ENCODE measurements at regions of chr12 and their contacts with region 1.

Region 1: DNA sequence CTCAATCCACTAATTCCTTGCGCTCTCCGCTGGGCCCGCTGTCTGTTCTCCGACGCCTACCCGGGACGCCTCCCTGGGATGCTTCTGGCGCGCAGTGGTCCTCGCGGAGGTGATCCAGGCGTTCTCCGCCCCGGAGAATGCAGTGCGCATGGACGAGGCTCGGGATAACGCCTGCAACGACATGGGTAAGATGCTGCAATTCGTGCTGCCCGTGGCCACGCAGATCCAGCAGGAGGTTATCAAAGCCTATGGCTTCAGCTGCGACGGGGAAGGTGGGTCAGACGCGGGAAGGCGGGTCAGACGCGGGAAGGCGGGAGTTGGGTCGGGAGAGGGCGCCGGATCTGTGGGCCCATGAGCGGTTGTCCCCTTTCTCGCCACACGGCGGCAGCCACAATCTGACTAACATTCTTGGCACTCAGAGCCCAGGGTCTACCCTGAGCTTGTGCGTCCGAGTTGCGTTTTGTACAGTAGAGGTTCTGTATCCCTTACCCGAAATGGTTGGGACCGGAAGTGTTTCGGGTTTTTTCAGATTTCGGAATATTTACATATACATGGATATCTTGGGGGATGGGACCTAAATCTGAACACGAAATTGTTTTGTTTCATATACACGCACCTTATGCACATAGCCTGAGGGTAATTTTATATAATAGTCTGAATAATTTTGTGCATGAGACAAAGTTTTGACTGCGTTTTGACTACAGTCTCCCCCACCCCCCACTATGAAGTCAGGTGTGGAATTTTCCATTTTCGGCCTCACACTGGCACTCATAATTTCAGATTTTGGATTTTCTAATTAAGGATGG is 762 bp downstream of the C12orf57 start:
- DNase-seq: peak; percentile 55 to 92 (median 65)
- ATAC-seq: peak; percentile 72
- H3K4me3 ChIP-seq: peak overlapping the region; percentile 49
- H3K27ac ChIP-seq: peak overlapping the region; percentile 96
- H3K4me1 ChIP-seq: peaks cover 13 to 50% of the 10 kb centered on the region in 2 experiments
- H3K27me3 ChIP-seq: no peaks in the 10 kb centered on the region
- CTCF ChIP-seq: peak; percentile 84 to 98 (median 92); a peak in 5 of 6 replicates
- EP300 ChIP-seq: no peak
- POLR2A ChIP-seq: no peak
- RAD21 ChIP-seq: peak; percentile 90 to 91

Region 2: DNA sequence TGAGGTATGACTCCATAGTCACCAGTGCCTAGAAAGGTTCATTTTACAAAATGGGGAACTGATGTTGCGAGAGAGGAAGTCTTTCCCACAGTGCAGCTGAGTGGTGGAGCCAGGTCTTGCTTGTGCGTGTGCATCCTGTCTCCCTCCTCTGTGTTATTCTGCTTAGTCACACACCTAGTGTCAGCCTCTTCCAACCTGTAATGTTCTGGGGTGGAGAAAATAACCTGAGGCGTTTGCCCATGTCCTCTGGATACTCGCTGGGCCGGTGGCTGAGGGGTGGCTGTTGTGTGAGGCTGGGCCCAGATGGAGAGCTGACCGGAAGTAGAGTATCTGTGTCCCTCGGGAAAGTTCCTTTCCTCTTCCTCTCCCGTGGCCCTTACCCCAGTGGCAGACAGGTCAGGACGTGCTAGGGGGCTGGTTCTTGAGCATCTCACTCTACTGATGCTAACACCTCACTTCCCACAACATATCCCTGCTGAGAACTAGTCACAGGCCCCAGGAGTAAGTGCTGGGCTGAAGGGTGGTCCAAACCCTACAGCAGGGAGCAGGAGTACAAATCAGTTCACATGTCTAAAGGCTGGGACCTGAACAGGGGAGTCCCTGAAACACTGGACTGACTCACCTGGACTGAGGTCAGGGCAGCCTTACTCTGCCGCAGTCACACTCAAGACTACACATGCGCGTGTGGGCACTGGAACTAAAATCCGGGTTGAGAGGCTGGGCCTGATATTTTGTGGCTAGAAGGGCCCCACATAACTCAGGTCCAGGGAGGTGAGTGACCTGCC is 198.7 kb before region 1 on chr12:
- CTCF ChIA-PET with region 1: no interaction called
- POLR2A ChIA-PET with region 1: no interaction called
- in situ Hi-C with region 1: no loop called
- intact Hi-C with region 1: no loop called
- DNase-seq: no peak
- ATAC-seq: peak; percentile 71
- H3K4me3 ChIP-seq: no peak overlapping the region
- H3K27ac ChIP-seq: peak overlapping the region; percentile 23; the same call in 1 of the 3 replicates
- H3K4me1 ChIP-seq: peaks cover 16 to 21% of the 10 kb centered on the region in 2 experiments; a peak in 4 of 5 replicates
- H3K27me3 ChIP-seq: no peaks in the 10 kb centered on the region
- CTCF ChIP-seq: no peak
- EP300 ChIP-seq: no peak
- POLR2A ChIP-seq: no peak
- RAD21 ChIP-seq: no peak

Region 3: GRCh38 chr12:6867413-6868210 is 77.0 kb before region 1 on chr12 and contains the start of gene TPI1:
- CTCF ChIA-PET with region 1: no interaction called
- POLR2A ChIA-PET with region 1: interaction called, 24 read pairs
- in situ Hi-C with region 1: loop called (anchors 5 kb)
- intact Hi-C with region 1: loop called (anchors 5 kb)
- DNase-seq: peak; percentile 78 to 91 (median 81)
- ATAC-seq: peak; percentile 83
- H3K4me3 ChIP-seq: peak within 1 kb of the TSS; percentile 96
- H3K27ac ChIP-seq: peak within 1 kb of the TSS; percentile 94
- H3K4me1 ChIP-seq: peaks cover 33 to 53% of the 10 kb centered on the region in 2 experiments; a peak in 4 of 5 replicates
- H3K27me3 ChIP-seq: no peaks in the 10 kb centered on the region
- CTCF ChIP-seq: 0 out of 6 replicates have a peak, but pooled peaks of 1 of the 3 experiments have one; percentile 3
- EP300 ChIP-seq: no peak
- POLR2A ChIP-seq: peak; percentile 99
- RAD21 ChIP-seq: no peak
- polyA plus RNA-seq, gene TPI1: 4,965 to 4,971 TPM

Region 4: DNA sequence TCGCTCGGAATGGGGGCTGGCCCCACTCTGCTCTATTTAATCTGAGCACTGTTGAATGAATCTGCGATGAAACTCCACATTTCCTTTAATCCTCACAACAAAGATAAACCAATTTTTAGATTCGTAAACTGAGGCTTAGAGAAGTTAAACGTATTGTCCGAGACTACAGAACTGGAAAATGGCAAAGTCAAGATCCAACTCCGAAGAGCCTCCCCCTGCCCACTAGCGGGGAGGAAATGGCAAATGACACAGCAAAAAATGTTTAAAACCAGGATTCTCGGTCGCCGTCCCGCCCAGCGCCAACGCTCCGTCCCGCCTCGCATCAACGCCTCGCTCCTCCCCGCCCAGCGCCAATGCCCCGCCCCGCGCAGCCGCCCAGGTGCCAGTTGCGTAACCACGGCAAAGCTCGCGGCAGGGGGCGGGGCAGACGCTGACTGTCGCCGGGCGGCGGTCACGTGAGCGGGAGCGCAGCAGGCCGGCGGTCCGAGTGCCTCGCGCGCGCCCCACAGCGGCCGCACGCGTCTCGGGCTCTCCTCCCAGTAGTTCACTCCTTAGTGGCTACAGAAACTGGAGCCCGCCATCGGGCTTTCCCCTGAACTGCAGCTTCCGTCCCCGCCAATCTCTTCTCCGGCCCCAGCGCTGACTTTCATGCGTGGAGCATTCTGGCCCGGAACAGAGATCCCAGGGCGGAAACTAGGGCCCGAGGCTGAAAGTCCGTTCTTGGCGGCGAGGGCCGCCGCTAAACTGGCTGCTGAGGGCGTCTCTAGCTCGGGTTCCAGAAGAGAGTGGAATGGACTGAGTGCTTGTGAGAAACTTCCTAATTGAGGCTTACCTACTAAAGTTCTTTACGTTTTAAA is 53.6 kb before region 1 on chr12:
- CTCF ChIA-PET with region 1: no interaction called
- POLR2A ChIA-PET with region 1: interaction called, 18 read pairs
- in situ Hi-C with region 1: no loop called
- intact Hi-C with region 1: no loop called
- DNase-seq: peak; percentile 89 to 96 (median 92)
- ATAC-seq: peak; percentile 97
- H3K4me3 ChIP-seq: peak overlapping the region; percentile 42
- H3K27ac ChIP-seq: peak overlapping the region; percentile 96
- H3K4me1 ChIP-seq: peaks cover 12 to 19% of the 10 kb centered on the region in 2 experiments; a peak in 4 of 5 replicates
- H3K27me3 ChIP-seq: no peaks in the 10 kb centered on the region
- CTCF ChIP-seq: peak; percentile 78 to 95 (median 88)
- EP300 ChIP-seq: peak; percentile 23; the same call in 1 of the 2 replicates
- POLR2A ChIP-seq: peak; percentile 87
- RAD21 ChIP-seq: peak; percentile 65 to 71

Region 5: DNA sequence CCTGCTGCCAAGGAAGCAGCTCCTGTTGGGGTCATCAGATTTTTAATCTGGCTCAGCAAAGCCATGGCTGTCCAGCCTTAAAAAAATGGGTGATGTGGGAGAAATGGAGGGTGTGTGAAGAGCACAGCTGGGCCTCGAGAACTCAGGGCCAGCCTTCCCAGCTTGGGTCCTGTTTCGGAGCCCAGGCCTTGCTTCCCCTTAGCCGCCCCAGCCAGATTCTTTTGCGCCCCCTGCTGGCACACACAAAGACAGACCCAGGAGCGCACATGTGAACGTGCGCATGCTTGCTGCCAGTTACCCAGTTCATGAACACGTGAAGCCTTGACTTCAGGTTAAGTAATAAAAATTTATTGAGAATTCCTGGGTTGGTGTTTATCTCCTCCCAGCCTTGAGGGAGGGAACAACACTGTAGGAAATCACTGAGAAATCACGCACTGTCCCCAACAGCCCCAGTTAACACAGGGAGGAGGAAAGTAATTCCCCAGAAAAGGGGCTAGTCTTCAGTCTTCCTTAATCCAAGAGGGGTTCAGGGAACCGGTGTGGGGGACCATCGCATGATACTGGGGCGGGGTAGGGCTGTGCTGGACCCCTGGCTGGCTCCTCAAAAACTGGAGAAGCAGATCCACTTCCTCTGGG is 20.6 kb after region 1 on chr12:
- CTCF ChIA-PET with region 1: interaction called, 13 read pairs
- POLR2A ChIA-PET with region 1: interaction called, 98 read pairs
- in situ Hi-C with region 1: no loop called
- intact Hi-C with region 1: loop called (anchors 1 kb)
- DNase-seq: peak; percentile 52 to 91 (median 67)
- ATAC-seq: peak; percentile 76
- H3K4me3 ChIP-seq: no peak overlapping the region
- H3K27ac ChIP-seq: peak overlapping the region; percentile 83
- H3K4me1 ChIP-seq: peaks cover 57 to 72% of the 10 kb centered on the region in 2 experiments
- H3K27me3 ChIP-seq: no peaks in the 10 kb centered on the region
- CTCF ChIP-seq: peak; percentile 83 to 86 (median 84)
- EP300 ChIP-seq: no peak
- POLR2A ChIP-seq: peak; percentile 50
- RAD21 ChIP-seq: peak; percentile 62 to 65

Region 6: GRCh38 chr12:7108796-7109571 is 164.4 kb after region 1 on chr12 and contains the start of gene C1RL:
- CTCF ChIA-PET with region 1: interaction called, 4 read pairs
- POLR2A ChIA-PET with region 1: interaction called, 23 read pairs
- in situ Hi-C with region 1: no loop called
- intact Hi-C with region 1: loop called (anchors 2 kb)
- DNase-seq: peak; percentile 66 to 88 (median 68)
- ATAC-seq: peak; percentile 58
- H3K4me3 ChIP-seq: peak within 1 kb of the TSS; percentile 75
- H3K27ac ChIP-seq: peak within 1 kb of the TSS; percentile 97
- H3K4me1 ChIP-seq: peaks cover 10 to 21% of the 10 kb centered on the region in 2 experiments
- H3K27me3 ChIP-seq: no peaks in the 10 kb centered on the region
- CTCF ChIP-seq: peak; percentile 83 to 93 (median 86)
- EP300 ChIP-seq: peak; percentile 62
- POLR2A ChIP-seq: peak; percentile 52; the same call in 1 of the 2 replicates
- RAD21 ChIP-seq: peak; percentile 63 to 73
- polyA plus RNA-seq, gene C1RL: 1.4 to 1.9 TPM

Measured in K562 (cell line).